ENCODE measurements at regions of chr2 and their contacts with region 1.

Region 1: GRCh38 chr2:229431327-229431954 is 160.4 kb upstream of the PID1 start:
- DNase-seq: no peak
- ATAC-seq: peak in 1 of 2 donors; percentile 21
- H3K4me3 ChIP-seq: no peak overlapping the region
- H3K27ac ChIP-seq: peak overlapping the region; percentile 19
- H3K4me1 ChIP-seq: no peaks in the 10 kb centered on the region
- H3K27me3 ChIP-seq: no peaks in the 10 kb centered on the region

Region 2: GRCh38 chr2:229714736-229715541 is 283.5 kb after region 1 on chr2:
- intact Hi-C with region 1: loop called in 2 of 4 experiments (anchors 5 to 10 kb)
- DNase-seq: peak; percentile 60 to 85 (median 81)
- ATAC-seq: peak; percentile 80 to 84
- H3K4me3 ChIP-seq: peak overlapping the region; percentile 51
- H3K27ac ChIP-seq: no peak overlapping the region
- H3K4me1 ChIP-seq: no peaks in the 10 kb centered on the region
- H3K27me3 ChIP-seq: no peaks in the 10 kb centered on the region